A549 (cell line): ENCODE measurements at regions of chr19 and their contacts with region 1.

Region 1: DNA sequence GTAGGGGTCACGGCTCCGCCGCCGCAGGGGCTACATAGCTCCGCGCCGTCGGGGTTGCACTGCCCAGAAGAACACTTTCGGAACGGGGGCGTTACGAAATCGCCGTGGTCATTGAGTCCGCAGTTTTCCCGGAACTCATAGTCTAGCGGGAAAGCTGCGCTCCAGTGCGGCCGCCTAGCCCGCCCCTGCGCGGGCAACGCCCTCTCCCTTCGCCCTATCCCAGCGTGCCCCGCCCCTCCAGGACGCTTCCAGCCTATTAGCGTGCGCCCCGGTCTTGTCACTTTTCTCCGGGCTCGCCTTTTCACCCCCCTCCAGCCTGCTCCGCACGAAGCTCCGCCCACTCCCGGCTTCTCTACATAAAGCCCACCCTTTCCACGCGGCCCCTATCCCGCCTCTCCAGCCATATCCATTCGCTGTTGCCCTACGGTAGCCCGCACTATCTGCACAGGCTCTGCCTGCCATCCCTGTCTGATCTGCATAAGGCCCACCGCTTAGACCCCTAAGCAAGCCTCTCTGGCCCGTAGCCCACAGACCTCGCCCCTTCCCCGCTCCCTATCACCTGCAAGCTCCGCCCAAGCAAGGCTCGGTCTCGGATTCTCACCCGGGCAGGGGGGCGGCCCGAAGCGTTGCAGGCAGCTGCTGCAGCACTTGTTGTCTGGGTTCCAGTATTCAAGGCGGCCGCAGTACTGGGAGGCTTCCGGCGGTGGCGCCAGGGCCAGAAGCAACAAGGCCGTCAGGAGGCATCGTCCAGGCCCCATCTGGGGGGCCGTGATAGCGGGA is 1.6 kb downstream of the IGFLR1 start:
- DNase-seq: peak; percentile 97 to 100
- ATAC-seq: peak; percentile 58 to 86
- H3K4me3 ChIP-seq: peak overlapping the region; percentile 47
- H3K27ac ChIP-seq: peak overlapping the region; percentile 70 to 84
- H3K4me1 ChIP-seq: peaks cover 20% of the 10 kb centered on the region
- CTCF ChIP-seq: no peak
- EP300 ChIP-seq: no peak
- POLR2A ChIP-seq: peak; percentile 78
- RAD21 ChIP-seq: peak in 1 of 2 experiments; percentile 3; a peak in 1 of 5 replicates

Region 2: DNA sequence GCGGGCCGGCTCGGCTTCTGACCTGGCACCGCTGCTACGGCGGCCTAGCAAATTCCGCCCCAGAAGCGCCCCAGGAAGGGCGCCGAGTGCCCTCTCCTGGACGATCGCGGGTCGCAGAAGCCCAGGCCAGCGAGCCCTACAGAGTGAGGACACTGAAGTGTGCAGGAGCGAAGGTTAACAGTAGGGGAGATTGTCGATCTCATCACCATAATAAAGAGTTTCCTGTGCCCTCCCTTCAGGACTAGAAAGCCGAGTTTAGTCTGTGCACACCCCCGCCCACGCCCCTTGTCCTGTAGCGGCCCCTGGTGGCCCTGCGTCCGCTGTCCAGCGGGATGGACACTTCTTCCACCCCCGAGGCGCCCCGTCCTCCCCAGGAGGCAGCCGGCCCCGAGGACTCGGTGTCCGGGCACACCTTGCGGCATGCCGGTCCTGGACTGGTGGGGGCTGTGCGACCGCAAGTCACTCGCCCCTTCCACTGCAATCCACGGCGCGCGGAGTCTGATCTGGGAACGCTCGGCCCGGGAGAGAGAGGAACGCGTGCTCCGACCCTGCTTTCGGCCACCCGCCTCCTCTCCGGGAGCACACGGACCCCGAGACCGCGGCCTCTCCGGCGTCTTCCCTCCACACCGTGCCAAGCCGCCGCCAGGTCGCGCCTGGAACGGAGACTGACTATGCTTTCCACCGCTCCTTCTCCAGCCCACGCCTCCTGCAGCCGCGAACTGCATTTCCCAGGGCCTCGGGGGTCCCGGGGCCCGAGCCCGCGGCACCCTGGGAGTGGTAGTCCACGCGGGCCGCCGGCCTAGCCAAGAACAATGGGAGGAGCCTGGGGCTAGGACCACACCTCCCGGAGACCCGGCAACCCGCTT is 23.6 kb before region 1 on chr19:
- CTCF ChIA-PET with region 1: interaction called, 29 read pairs
- POLR2A ChIA-PET with region 1: interaction called, 7 read pairs
- DNase-seq: peak; percentile 95 to 99
- ATAC-seq: peak; percentile 74 to 91
- H3K4me3 ChIP-seq: peak overlapping the region; percentile 87
- H3K27ac ChIP-seq: peak overlapping the region; percentile 91 to 98
- H3K4me1 ChIP-seq: peaks cover 20% of the 10 kb centered on the region
- CTCF ChIP-seq: peak; percentile 100
- EP300 ChIP-seq: no peak
- POLR2A ChIP-seq: peak; percentile 74
- RAD21 ChIP-seq: peak; percentile 89 to 99

Region 3: DNA sequence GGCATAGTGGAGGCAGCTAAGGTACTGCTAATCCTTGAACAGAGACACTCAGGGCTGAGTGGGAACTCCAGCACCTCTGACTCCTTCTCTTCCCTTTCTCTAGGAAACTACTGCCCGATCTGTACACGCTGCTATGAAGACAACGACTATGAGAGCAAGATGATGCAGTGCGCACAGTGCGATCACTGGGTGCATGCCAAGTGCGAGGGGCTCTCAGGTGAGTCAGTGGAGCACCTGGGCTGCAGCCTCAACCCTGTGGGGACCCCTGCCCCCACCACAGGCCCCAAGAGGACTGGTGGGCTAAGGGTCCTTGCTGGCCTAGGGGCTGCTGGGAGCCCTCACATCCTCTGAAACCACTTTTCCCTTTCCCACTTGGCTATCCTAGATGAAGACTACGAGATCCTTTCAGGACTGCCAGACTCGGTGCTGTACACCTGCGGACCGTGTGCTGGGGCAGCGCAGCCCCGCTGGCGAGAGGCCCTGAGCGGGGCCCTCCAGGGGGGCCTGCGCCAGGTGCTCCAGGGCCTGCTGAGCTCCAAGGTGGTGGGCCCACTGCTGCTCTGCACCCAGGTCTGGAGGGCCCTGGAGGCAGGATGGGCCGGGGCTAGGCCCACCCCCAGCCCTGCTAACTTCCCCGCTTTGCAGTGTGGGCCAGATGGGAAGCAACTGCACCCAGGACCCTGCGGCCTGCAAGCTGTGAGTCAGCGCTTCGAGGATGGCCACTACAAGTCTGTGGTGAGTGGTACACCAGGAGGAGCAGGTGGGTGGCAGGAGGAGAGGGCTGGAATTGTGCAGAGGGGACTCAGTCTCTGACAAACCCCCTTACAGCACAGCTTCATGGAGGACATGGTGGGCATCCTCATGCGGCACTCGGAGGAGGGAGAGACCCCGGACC is 13.3 kb before region 1 on chr19:
- CTCF ChIA-PET with region 1: interaction called, 32 read pairs
- POLR2A ChIA-PET with region 1: interaction called, 10 read pairs
- DNase-seq: no peak
- ATAC-seq: no peak
- H3K4me3 ChIP-seq: no peak overlapping the region
- H3K27ac ChIP-seq: no peak overlapping the region
- H3K4me1 ChIP-seq: no peaks in the 10 kb centered on the region
- CTCF ChIP-seq: no peak
- EP300 ChIP-seq: no peak
- POLR2A ChIP-seq: no peak
- RAD21 ChIP-seq: no peak

Region 4: GRCh38 chr19:35919306-35919705 is 178.7 kb after region 1 on chr19:
- CTCF ChIA-PET with region 1: no interaction called
- POLR2A ChIA-PET with region 1: no interaction called
- DNase-seq: no peak
- ATAC-seq: no peak
- H3K4me3 ChIP-seq: no peak overlapping the region
- H3K27ac ChIP-seq: no peak overlapping the region
- H3K4me1 ChIP-seq: no peaks in the 10 kb centered on the region
- CTCF ChIP-seq: no peak
- EP300 ChIP-seq: no peak
- POLR2A ChIP-seq: no peak
- RAD21 ChIP-seq: no peak